Activated CD4-positive, alpha-beta T cell treated with anti-CD3 and anti-CD28 coated beads, Interleukin-2, amount 10 ng/mL, durations not matched to agents 24 days and 14 days (primary cell): ENCODE measurements at regions of chr14 and their contacts with region 1.

Region 1: GRCh38 chr14:32469388-32470160 is 140.5 kb downstream of the AKAP6 start:
- DNase-seq: no peak
- H3K4me3 Mint-ChIP-seq: no peak overlapping the region
- H3K27ac Mint-ChIP-seq: no peak overlapping the region
- H3K4me1 Mint-ChIP-seq: no peaks in the 10 kb centered on the region
- H3K27me3 Mint-ChIP-seq: peaks cover 7% of the 10 kb centered on the region

Region 2: DNA sequence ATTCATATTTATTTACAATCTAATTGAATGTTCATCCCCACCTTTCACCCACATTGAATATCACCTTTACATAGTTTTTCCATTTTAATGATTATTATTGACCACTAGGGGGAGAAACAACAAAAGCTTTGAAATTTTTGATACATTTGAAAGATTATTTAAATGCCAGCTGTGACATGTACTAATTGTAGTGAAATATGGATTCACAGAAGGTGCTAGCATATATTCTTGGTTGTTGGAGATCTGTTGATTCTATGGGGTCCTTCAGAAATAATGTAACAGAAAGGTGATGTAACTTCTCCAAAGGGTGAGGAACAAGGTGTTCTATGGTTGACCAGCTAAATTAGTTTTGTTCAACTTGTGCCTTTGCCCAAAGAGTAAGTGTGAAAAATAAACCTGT is 959.4 kb before region 1 on chr14:
- intact Hi-C with region 1: loop called (anchors 2 kb)
- DNase-seq: no peak
- H3K4me3 Mint-ChIP-seq: no peak overlapping the region
- H3K27ac Mint-ChIP-seq: no peak overlapping the region
- H3K4me1 Mint-ChIP-seq: no peaks in the 10 kb centered on the region
- H3K27me3 Mint-ChIP-seq: peaks cover 9% of the 10 kb centered on the region

Region 3: DNA sequence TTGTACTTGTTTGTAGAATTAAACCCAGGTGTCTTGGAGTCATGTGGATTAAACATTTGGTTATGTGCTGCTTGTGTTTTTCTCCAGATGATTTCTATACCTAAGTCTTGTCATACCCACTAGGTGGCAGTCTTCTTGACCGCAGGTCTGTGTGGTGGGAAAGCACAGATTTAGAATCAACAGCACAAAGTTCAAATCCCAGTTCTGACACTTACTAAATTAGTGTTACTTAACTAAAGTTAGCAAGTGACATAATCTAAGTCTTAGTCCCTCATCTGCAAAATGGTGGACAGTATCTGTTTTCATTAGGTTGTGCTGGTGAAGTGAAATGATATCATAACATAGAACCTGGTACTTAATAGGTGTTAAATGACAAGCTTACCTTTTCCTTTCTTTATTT is 543.5 kb before region 1 on chr14:
- intact Hi-C with region 1: loop called (anchors 2 kb)
- DNase-seq: peak; percentile 76
- H3K4me3 Mint-ChIP-seq: no peak overlapping the region
- H3K27ac Mint-ChIP-seq: no peak overlapping the region
- H3K4me1 Mint-ChIP-seq: peaks cover 8% of the 10 kb centered on the region
- H3K27me3 Mint-ChIP-seq: no peaks in the 10 kb centered on the region

Region 4: GRCh38 chr14:32531942-32532515 is 62.5 kb after region 1 on chr14:
- intact Hi-C with region 1: no loop called
- DNase-seq: no peak
- H3K4me3 Mint-ChIP-seq: no peak overlapping the region
- H3K27ac Mint-ChIP-seq: no peak overlapping the region
- H3K4me1 Mint-ChIP-seq: no peaks in the 10 kb centered on the region
- H3K27me3 Mint-ChIP-seq: peaks cover 4% of the 10 kb centered on the region

Region 5: DNA sequence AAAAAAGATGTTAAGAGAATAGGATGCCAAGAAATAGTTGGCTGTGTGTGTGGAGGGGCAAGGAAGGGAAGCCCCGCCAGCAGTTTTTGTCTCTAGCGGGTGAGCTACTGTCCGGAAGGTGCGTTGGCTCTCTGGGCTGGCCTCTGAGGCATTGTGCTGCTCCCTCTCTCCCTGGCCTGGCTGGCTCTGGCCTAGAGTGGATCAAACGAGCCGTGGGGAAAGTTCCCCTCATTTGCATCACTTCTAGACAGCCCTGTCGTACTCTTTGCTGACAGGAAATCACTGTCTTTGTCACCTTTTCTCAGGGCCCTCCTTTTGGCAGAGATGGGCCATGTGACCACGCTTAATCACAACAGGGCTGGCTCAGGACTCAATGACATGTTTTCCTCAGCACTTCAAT is 233.0 kb after region 1 on chr14:
- intact Hi-C with region 1: no loop called
- DNase-seq: no peak
- H3K4me3 Mint-ChIP-seq: no peak overlapping the region
- H3K27ac Mint-ChIP-seq: no peak overlapping the region
- H3K4me1 Mint-ChIP-seq: no peaks in the 10 kb centered on the region
- H3K27me3 Mint-ChIP-seq: no peaks in the 10 kb centered on the region